MCF 10A (cell line): ENCODE measurements at regions of chr4 and their contacts with region 1.

Region 1: GRCh38 chr4:147361726-147362125 is 119.2 kb upstream of the EDNRA start:
- DNase-seq: peak; percentile 76
- H3K4me3 Mint-ChIP-seq: no peak overlapping the region
- H3K27ac Mint-ChIP-seq: peak overlapping the region; percentile 88
- H3K4me1 Mint-ChIP-seq: peaks cover 39% of the 10 kb centered on the region
- H3K27me3 Mint-ChIP-seq: no peaks in the 10 kb centered on the region
- CTCF ChIP-seq: no peak

Region 2: DNA sequence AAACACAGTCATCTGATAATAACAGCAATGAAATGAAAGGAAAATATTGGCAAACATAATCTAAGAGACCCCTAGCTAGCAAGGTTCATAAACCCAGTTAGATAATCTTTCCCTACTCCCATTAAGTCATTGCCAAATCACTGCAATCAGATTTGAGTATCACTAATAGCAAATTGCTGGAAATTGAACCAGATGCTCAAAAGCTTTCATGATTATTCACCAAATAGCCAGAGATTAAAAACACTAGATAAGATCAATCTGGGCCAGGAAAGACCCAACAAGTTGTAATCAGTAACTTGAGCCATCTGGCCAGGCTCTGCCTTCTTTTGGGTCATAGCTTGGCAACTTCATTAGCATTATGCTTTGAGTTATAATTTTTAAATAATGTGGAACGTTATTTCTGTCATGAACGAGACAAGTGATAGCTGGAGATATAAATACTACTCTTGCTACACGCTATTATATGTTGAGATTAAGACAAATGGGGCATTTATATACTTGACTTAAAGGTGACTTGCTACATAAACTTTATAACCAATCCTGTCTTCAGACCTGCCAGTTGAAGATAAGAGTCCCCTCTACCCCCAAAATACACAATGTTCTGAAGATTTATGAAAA is 77.4 kb before region 1 on chr4:
- CTCF ChIA-PET with region 1: no interaction called
- POLR2A ChIA-PET with region 1: no interaction called
- intact Hi-C with region 1: no loop called
- DNase-seq: no peak
- H3K4me3 Mint-ChIP-seq: no peak overlapping the region
- H3K27ac Mint-ChIP-seq: no peak overlapping the region
- H3K4me1 Mint-ChIP-seq: peaks cover 13% of the 10 kb centered on the region
- H3K27me3 Mint-ChIP-seq: no peaks in the 10 kb centered on the region
- CTCF ChIP-seq: no peak

Region 3: GRCh38 chr4:147378779-147379178 is 17.1 kb after region 1 on chr4:
- CTCF ChIA-PET with region 1: interaction called, 11 read pairs
- POLR2A ChIA-PET with region 1: no interaction called
- intact Hi-C with region 1: no loop called
- DNase-seq: peak; percentile 62
- H3K4me3 Mint-ChIP-seq: no peak overlapping the region
- H3K27ac Mint-ChIP-seq: no peak overlapping the region
- H3K4me1 Mint-ChIP-seq: no peaks in the 10 kb centered on the region
- H3K27me3 Mint-ChIP-seq: no peaks in the 10 kb centered on the region
- CTCF ChIP-seq: peak; percentile 19